Endothelial cell of umbilical vein (primary cell): ENCODE measurements at regions of chr3 and their contacts with region 1.

Region 1: GRCh38 chr3:136818769-136819391 is at the start of gene SLC35G2:
- DNase-seq: peak; percentile 84
- H3K4me3 ChIP-seq: peak within 1 kb of the TSS; percentile 31 to 78 (median 77)
- H3K27ac ChIP-seq: peak within 1 kb of the TSS; percentile 97
- H3K4me1 ChIP-seq: peaks cover 16% of the 10 kb centered on the region
- H3K27me3 ChIP-seq: no peaks in the 10 kb centered on the region
- CTCF ChIP-seq: no peak
- POLR2A ChIP-seq: no peak
- total RNA-seq, gene SLC35G2: 17.7 and 19.4 TPM in 2 replicates

Region 2: GRCh38 chr3:136075218-136075808 is 743.6 kb before region 1 on chr3:
- CTCF ChIA-PET with region 1: no interaction called
- POLR2A ChIA-PET with region 1: no interaction called
- dilution Hi-C with region 1: no loop called
- intact Hi-C with region 1: loop called (anchors 5 kb)
- DNase-seq: peak; percentile 81
- H3K4me3 ChIP-seq: no peak overlapping the region
- H3K27ac ChIP-seq: no peak overlapping the region
- H3K4me1 ChIP-seq: no peaks in the 10 kb centered on the region
- H3K27me3 ChIP-seq: no peaks in the 10 kb centered on the region
- CTCF ChIP-seq: peak; percentile 63 to 76
- POLR2A ChIP-seq: no peak

Region 3: DNA sequence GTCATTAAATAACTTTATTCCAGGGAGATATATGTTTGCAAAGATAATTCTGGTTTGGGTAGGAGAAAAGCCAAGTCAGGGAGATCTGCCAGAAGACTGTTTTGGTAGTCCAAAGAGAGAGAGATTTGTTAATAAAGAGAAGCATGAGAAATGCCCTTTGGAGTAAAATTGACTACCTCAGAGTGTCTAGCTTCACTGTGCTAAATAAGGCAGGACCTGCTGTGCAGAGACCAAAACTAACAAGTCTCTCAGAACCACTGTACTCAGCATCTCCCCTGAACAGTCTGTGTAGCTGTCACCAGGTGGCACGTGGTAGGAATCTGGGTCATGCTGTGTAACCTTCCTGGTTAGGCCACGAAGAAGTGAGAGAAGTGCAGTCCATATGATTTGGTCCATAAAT is 31.5 kb before region 1 on chr3:
- CTCF ChIA-PET with region 1: no interaction called
- POLR2A ChIA-PET with region 1: no interaction called
- dilution Hi-C with region 1: no loop called
- intact Hi-C with region 1: loop called (anchors 2 kb)
- DNase-seq: peak; percentile 50
- H3K4me3 ChIP-seq: no peak overlapping the region
- H3K27ac ChIP-seq: peak overlapping the region; percentile 87
- H3K4me1 ChIP-seq: peaks cover 15% of the 10 kb centered on the region
- H3K27me3 ChIP-seq: no peaks in the 10 kb centered on the region
- CTCF ChIP-seq: no peak
- POLR2A ChIP-seq: no peak

Region 4: DNA sequence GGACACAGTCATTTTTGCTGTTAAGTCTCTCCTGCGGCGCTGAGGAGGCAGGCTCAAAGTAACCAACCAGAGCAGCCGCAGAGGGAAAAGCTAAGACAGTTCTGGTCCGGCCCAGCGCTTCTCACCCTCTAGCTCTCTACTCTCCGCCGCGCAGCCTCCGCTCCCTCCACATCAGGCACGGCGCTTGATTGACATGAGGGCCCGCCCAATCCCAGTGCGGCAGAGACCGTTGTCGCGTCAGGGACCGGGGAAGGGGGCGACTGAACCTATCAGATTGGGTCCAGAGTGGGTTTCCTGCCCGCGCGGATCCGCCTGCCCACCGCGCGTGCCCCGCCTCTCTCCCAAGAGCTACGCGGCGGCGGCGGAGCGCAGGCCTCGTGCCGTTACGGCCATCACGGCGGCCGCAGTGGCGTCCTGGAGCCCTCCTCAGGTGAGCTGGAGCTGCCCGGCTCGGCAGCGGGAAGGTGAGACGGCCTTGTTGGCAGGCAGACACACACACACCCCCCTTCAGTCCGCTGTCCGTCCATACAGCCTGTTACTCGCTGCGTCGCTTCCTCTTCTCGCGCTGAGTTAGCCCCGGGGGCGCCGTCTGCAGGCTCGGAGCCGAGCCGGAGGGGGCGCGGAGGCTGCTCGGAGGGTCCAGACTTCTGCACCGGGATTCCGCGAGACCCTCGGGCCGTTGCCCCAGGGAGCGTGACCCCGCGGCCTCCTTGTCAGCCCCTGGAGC is 43.2 kb after region 1 on chr3 and contains the start of gene NCK1:
- CTCF ChIA-PET with region 1: interaction called, 9 read pairs
- POLR2A ChIA-PET with region 1: interaction called, 8 read pairs
- dilution Hi-C with region 1: no loop called
- intact Hi-C with region 1: loop called (anchors 1 kb)
- DNase-seq: peak; percentile 99
- H3K4me3 ChIP-seq: peak within 1 kb of the TSS; percentile 81 to 96 (median 95)
- H3K27ac ChIP-seq: peak within 1 kb of the TSS; percentile 83
- H3K4me1 ChIP-seq: peaks cover 13% of the 10 kb centered on the region
- H3K27me3 ChIP-seq: no peaks in the 10 kb centered on the region
- CTCF ChIP-seq: peak in 1 of 2 donors; percentile 23
- POLR2A ChIP-seq: peak; percentile 91
- total RNA-seq, gene NCK1: 45.1 and 52.2 TPM in 2 replicates

Region 5: DNA sequence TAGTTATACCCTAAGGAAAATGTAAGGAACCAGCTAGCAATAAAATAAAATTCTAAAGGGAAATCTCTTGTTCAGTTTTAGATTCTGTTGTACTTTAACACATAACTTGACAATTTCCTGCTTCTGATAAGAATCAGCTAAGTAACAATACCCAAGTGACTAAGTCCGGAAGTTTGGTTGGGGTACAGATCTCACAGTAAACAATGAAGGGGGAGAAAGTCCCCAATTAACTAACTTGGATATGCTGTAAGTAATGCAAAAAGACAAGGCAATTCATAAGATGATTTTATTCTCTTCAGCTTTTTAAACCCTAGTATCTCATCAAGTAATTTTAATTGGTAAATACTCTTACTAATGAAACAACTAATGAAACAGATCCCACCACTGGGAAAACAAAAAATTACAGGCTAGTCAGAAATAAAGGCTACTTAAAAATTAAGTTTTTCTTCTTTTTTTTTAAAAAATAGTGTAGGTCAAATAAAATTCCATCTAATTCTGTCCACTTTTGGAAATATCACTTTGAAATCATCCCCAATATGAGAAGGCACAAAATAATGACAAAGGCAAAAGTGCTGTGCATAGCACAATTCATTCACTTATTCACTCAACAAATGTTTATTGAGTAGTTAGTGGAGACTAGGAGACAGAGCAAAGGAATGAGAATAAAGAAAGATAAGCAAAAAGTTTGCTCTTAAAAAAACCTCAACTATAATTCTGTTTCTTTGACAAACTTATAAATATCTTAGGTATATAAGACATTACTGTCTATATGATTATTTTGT is 101.1 kb after region 1 on chr3:
- CTCF ChIA-PET with region 1: no interaction called
- POLR2A ChIA-PET with region 1: no interaction called
- dilution Hi-C with region 1: no loop called
- intact Hi-C with region 1: loop called (anchors 1 kb)
- DNase-seq: peak; percentile 92
- H3K4me3 ChIP-seq: peak overlapping the region in 1 of 3 experiments; percentile 9
- H3K27ac ChIP-seq: peak overlapping the region; percentile 74
- H3K4me1 ChIP-seq: peaks cover 32% of the 10 kb centered on the region
- H3K27me3 ChIP-seq: no peaks in the 10 kb centered on the region
- CTCF ChIP-seq: no peak
- POLR2A ChIP-seq: peak; percentile 64

Region 6: DNA sequence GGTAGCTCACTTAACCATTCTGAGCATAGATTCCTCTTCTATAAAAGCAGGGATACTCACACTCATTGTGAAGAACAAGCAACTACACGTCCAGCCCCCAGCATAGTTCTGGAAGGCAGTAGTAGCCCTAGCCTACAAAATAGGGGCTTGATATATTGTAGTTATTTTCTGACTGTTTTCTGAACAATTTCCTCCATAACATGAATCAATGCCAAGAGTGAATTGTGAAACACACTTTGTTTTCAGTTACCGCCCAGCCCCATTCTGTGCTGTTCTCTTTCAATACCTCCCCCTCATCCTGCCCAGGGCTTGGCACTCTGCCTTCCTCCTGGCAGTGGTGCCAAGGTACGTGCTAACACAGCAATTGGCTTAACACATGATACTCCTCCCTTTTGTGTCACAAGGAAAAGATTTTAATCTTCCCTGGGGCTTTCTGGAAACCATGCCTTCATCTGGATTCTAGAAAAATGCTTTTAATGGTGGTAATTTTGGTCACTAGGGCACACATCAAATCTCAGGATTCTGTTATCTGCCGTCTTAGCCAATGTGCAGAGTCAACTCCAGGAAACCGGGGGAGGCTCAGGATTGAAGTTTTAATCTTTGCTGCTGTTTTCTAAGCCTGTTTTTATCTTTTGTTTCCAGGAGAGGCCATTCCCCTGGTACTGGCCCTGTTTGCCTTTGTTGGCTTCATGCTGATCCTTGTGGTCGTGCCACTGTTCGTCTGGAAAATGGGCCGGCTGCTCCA is 176.1 kb after region 1 on chr3:
- CTCF ChIA-PET with region 1: no interaction called
- POLR2A ChIA-PET with region 1: no interaction called
- dilution Hi-C with region 1: no loop called
- intact Hi-C with region 1: loop called (anchors 1 kb)
- DNase-seq: peak; percentile 98
- H3K4me3 ChIP-seq: no peak overlapping the region
- H3K27ac ChIP-seq: peak overlapping the region; percentile 32
- H3K4me1 ChIP-seq: peaks cover 15% of the 10 kb centered on the region
- H3K27me3 ChIP-seq: no peaks in the 10 kb centered on the region
- CTCF ChIP-seq: no peak
- POLR2A ChIP-seq: no peak